ENCODE measurements at regions of chr1 and their contacts with region 1.

Region 1: GRCh38 chr1:43946236-43947060 is at the start of gene IPO13:
- DNase-seq: peak; percentile 98
- ATAC-seq: peak; percentile 96
- H3K4me3 Mint-ChIP-seq: peak within 1 kb of the TSS; percentile 94
- H3K27ac Mint-ChIP-seq: peak within 1 kb of the TSS; percentile 96
- H3K4me1 Mint-ChIP-seq: peaks cover 37% of the 10 kb centered on the region
- H3K27me3 Mint-ChIP-seq: no peaks in the 10 kb centered on the region
- total RNA-seq, gene IPO13: 10.7 to 12.5 TPM

Region 2: GRCh38 chr1:43358746-43359693 is 587.4 kb before region 1 on chr1 and contains the start of gene CDC20:
- CTCF ChIA-PET with region 1: no interaction called
- POLR2A ChIA-PET with region 1: no interaction called
- intact Hi-C with region 1: loop called in 1 of 2 experiments (anchors 2 kb)
- DNase-seq: peak; percentile 99
- ATAC-seq: peak; percentile 99
- H3K4me3 Mint-ChIP-seq: peak within 1 kb of the TSS; percentile 97
- H3K27ac Mint-ChIP-seq: peak within 1 kb of the TSS; percentile 93
- H3K4me1 Mint-ChIP-seq: peaks cover 32% of the 10 kb centered on the region
- H3K27me3 Mint-ChIP-seq: no peaks in the 10 kb centered on the region
- total RNA-seq, gene CDC20: 158 to 163 TPM

Region 3: GRCh38 chr1:43650310-43651085 is 295.9 kb before region 1 on chr1:
- CTCF ChIA-PET with region 1: interaction called, 3 read pairs
- POLR2A ChIA-PET with region 1: no interaction called
- intact Hi-C with region 1: loop called (anchors 1 kb)
- DNase-seq: peak; percentile 95
- ATAC-seq: peak; percentile 81
- H3K4me3 Mint-ChIP-seq: peak overlapping the region; percentile 89
- H3K27ac Mint-ChIP-seq: peak overlapping the region; percentile 97
- H3K4me1 Mint-ChIP-seq: peaks cover 31% of the 10 kb centered on the region
- H3K27me3 Mint-ChIP-seq: no peaks in the 10 kb centered on the region

Region 4: DNA sequence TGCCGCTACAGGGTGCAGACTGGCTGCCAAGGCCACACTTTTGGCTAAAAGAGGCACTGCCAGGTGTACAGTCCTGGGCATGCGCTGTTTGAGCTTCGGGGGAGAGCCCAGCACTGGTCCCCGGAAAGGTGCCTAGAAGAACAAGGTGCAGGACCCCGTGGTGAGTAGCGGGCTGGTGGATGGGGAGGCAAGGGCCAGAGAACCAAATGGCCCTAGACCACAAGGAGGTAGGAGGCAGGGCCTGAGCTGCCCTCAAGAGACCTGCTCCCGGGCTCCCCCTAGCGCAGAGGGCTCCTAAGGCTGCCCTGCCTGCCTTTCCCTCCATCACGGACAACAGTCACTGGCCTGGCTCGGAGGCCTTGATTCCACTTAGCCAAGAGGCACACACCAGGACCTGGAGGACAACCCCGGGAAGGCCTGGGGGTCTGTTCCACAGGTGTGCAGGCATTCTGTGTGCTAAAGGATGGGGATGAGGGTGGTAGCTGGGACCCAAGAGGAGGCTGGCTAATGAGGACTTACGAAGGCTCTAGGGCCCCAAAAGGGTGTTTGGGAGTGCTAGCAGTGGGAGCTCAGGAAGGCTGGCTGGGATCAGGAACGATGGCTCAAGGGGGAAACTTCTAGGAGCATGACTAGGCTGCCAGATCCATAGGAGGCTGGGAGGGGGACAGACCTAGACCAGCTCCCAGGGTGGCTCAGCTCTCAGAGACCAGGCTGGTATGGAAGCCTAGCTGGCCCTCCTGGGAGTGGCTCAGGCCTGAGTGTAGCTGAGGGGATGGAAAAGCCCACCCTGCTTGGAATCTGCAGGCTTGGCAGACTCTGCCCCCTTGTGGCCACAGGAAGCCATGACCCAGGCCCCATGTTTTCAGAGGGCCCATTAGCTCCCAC is 12.1 kb before region 1 on chr1:
- CTCF ChIA-PET with region 1: interaction called, 96 read pairs
- POLR2A ChIA-PET with region 1: interaction called, 4 read pairs
- intact Hi-C with region 1: no loop called
- DNase-seq: peak; percentile 84
- ATAC-seq: peak; percentile 73
- H3K4me3 Mint-ChIP-seq: peak overlapping the region; percentile 16
- H3K27ac Mint-ChIP-seq: no peak overlapping the region
- H3K4me1 Mint-ChIP-seq: peaks cover 15% of the 10 kb centered on the region
- H3K27me3 Mint-ChIP-seq: peaks cover 25% of the 10 kb centered on the region

Region 5: GRCh38 chr1:44029906-44030604 is 83.6 kb after region 1 on chr1:
- CTCF ChIA-PET with region 1: interaction called, 3 read pairs
- POLR2A ChIA-PET with region 1: no interaction called
- intact Hi-C with region 1: loop called in 1 of 2 experiments (anchors 1 kb)
- DNase-seq: peak; percentile 94
- ATAC-seq: peak; percentile 83
- H3K4me3 Mint-ChIP-seq: peak overlapping the region; percentile 88
- H3K27ac Mint-ChIP-seq: peak overlapping the region; percentile 96
- H3K4me1 Mint-ChIP-seq: peaks cover 24% of the 10 kb centered on the region
- H3K27me3 Mint-ChIP-seq: no peaks in the 10 kb centered on the region

Region 6: GRCh38 chr1:44631647-44632539 is 685.4 kb after region 1 on chr1:
- CTCF ChIA-PET with region 1: no interaction called
- POLR2A ChIA-PET with region 1: no interaction called
- intact Hi-C with region 1: loop called in 1 of 2 experiments (anchors 1 kb)
- DNase-seq: peak; percentile 95
- ATAC-seq: peak; percentile 81
- H3K4me3 Mint-ChIP-seq: peak overlapping the region; percentile 86
- H3K27ac Mint-ChIP-seq: peak overlapping the region; percentile 97
- H3K4me1 Mint-ChIP-seq: peaks cover 40% of the 10 kb centered on the region
- H3K27me3 Mint-ChIP-seq: no peaks in the 10 kb centered on the region

Measured in activated CD4-positive, alpha-beta T cell treated with anti-CD3 and anti-CD28 coated beads for 36 hours (primary cell).